Aorta (tissue), 5 donors: ENCODE measurements at regions of chr16 and their contacts with region 1.

Region 1: GRCh38 chr16:86033016-86033474 is 134.1 kb downstream of the IRF8 start:
- DNase-seq: no peak
- ATAC-seq: peak; percentile 22
- H3K4me3 ChIP-seq: no peak overlapping the region
- H3K27ac ChIP-seq: no peak overlapping the region
- H3K4me1 ChIP-seq: no peaks in the 10 kb centered on the region
- H3K27me3 ChIP-seq: no peaks in the 10 kb centered on the region

Region 2: GRCh38 chr16:85844786-85845185 is 188.3 kb before region 1 on chr16:
- intact Hi-C with region 1: loop called in 1 of 2 experiments (anchors 5 kb)
- DNase-seq: peak in 1 of 2 donors; percentile 34
- ATAC-seq: no peak
- H3K4me3 ChIP-seq: no peak overlapping the region
- H3K27ac ChIP-seq: no peak overlapping the region
- H3K4me1 ChIP-seq: no peaks in the 10 kb centered on the region
- H3K27me3 ChIP-seq: no peaks in the 10 kb centered on the region

Region 3: DNA sequence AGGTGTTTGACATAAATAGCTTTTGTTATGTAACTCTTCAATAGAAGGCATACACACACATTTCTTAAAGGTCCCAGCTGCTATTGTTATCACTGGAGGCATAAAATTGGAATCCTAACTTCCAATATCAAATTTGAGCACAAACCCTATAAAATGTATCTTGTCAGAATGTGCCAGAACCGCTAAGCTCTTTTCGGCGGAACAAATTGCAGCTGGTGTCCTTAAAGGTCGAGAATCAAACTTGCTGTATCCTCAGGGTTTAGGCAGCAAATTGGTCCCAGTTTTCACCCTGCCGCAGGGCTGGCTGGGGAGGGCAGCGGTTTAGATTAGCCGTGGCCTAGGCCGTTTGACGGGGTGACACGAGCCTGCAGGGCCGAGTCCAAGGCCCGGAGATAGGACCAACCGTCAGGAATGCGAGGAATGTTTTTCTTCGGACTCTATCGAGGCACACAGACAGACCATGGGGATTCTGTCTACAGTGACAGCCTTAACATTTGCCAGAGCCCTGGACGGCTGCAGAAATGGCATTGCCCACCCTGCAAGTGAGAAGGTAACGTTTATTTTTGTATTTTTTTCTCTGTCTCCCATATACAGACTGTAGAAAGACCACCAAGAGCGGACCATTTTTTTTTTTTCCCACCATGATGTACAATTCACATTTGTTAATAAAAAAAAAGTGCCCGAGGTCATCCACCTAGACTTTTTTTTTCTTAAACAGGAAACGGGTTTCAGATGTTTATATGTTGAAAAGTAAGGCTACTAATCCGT is 163.0 kb after region 1 on chr16:
- intact Hi-C with region 1: no loop called
- DNase-seq: no peak
- ATAC-seq: no peak
- H3K4me3 ChIP-seq: no peak overlapping the region
- H3K27ac ChIP-seq: no peak overlapping the region
- H3K4me1 ChIP-seq: no peaks in the 10 kb centered on the region
- H3K27me3 ChIP-seq: no peaks in the 10 kb centered on the region